Left cardiac atrium (tissue), 4 donors: ENCODE measurements at regions of chr1 and their contacts with region 1.

Region 1: GRCh38 chr1:227612658-227613057 is 49.3 kb downstream of the ZNF678 start:
- DNase-seq: no peak
- ATAC-seq: no peak

Region 2: GRCh38 chr1:227372726-227373130 is 239.9 kb before region 1 on chr1:
- intact Hi-C with region 1: no loop called
- DNase-seq: peak; percentile 35
- ATAC-seq: no peak

Region 3: DNA sequence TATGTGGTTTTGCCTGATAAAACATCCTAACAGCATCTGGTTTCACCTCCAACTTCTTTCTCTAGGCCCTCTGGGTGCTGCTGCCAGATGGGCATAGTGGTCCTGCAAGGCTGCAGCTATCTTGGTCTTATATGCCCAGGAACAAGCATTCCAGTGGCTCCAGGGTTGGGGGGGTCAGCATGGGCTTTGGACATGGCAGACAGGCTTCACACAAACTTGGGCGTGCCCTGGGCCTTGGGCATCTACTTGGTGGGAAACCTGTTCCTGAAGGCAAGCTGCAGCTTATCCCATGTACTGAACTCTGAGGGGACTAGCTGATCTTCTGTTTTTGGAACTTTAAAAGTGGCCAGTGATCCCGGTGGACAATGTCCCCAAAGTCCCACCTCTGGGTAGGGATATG is 104.2 kb before region 1 on chr1:
- intact Hi-C with region 1: no loop called
- DNase-seq: no peak
- ATAC-seq: no peak

Region 4: DNA sequence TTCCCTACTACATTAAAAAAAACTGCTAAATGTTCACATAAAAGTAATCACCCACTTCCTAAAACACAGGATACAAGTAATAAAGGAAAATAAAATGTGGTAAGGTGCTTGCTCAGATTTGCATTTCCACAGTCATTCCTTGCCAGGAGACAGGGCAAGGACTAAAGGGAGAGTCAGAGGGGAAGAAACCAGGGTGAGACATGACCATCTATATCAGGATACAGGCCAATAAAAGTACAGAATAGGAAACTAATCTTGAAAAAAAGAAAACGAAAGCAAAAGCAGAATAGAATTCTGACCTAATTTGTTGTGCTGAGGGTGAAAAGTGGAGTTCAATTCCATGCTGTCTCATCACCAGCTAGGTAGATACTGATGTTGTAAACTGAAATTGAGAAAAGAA is 95.1 kb after region 1 on chr1:
- intact Hi-C with region 1: loop called in 1 of 2 experiments (anchors 10 kb)
- DNase-seq: no peak
- ATAC-seq: no peak